HCT116 (cell line): ENCODE measurements at regions of chr9 and their contacts with region 1.

Region 1: GRCh38 chr9:22008736-22009562 is at the start of gene CDKN2B:
- DNase-seq: peak; percentile 80
- ATAC-seq: peak; percentile 89
- H3K4me3 ChIP-seq: peak within 1 kb of the TSS; percentile 71 to 80
- H3K27ac ChIP-seq: peak within 1 kb of the TSS; percentile 61
- H3K4me1 ChIP-seq: peaks cover 5 to 6% of the 10 kb centered on the region in 2 experiments; a peak in 3 of 4 replicates
- H3K27me3 ChIP-seq: no peaks in the 10 kb centered on the region
- CTCF ChIP-seq: peak; percentile 82 to 98 (median 90)
- POLR2A ChIP-seq: peak; percentile 65
- RAD21 ChIP-seq: peak; percentile 77
- total RNA-seq, gene CDKN2B: 9.8 TPM

Region 2: GRCh38 chr9:21836437-21837161 is 172.3 kb before region 1 on chr9:
- CTCF ChIA-PET with region 1: interaction called, 10 read pairs
- POLR2A ChIA-PET with region 1: interaction called, 5 read pairs
- RAD21 ChIA-PET with region 1: no interaction called
- intact Hi-C with region 1: no loop called
- DNase-seq: peak; percentile 94
- ATAC-seq: peak; percentile 80
- H3K4me3 ChIP-seq: peak overlapping the region; percentile 6 to 33; a peak in 2 of 4 replicates
- H3K27ac ChIP-seq: peak overlapping the region; percentile 66
- H3K4me1 ChIP-seq: peaks cover 18 to 62% of the 10 kb centered on the region in 2 experiments
- H3K27me3 ChIP-seq: no peaks in the 10 kb centered on the region
- CTCF ChIP-seq: no peak
- POLR2A ChIP-seq: no peak
- RAD21 ChIP-seq: no peak; the same call in 1 of the 2 replicates

Region 3: GRCh38 chr9:22037954-22038690 is 29.2 kb after region 1 on chr9:
- CTCF ChIA-PET with region 1: interaction called, 12 read pairs
- POLR2A ChIA-PET with region 1: interaction called, 9 read pairs
- RAD21 ChIA-PET with region 1: interaction called in 1 of 2 experiments, 3 read pairs
- intact Hi-C with region 1: loop called (anchors 5 kb)
- DNase-seq: peak; percentile 33
- ATAC-seq: peak; percentile 57; the same call in 1 of the 2 replicates
- H3K4me3 ChIP-seq: no peak overlapping the region
- H3K27ac ChIP-seq: no peak overlapping the region
- H3K4me1 ChIP-seq: peaks cover 11 to 17% of the 10 kb centered on the region in 2 experiments
- H3K27me3 ChIP-seq: no peaks in the 10 kb centered on the region
- CTCF ChIP-seq: peak; percentile 48 to 60 (median 55); a peak in 4 of 6 replicates
- POLR2A ChIP-seq: no peak
- RAD21 ChIP-seq: peak; percentile 76

Region 4: GRCh38 chr9:22119537-22120158 is 110.7 kb after region 1 on chr9:
- CTCF ChIA-PET with region 1: interaction called, 22 read pairs
- POLR2A ChIA-PET with region 1: interaction called, 8 read pairs
- RAD21 ChIA-PET with region 1: interaction called, 3 to 6 read pairs
- intact Hi-C with region 1: loop called (anchors 5 kb)
- DNase-seq: no peak
- ATAC-seq: peak; percentile 87
- H3K4me3 ChIP-seq: no peak overlapping the region
- H3K27ac ChIP-seq: no peak overlapping the region
- H3K4me1 ChIP-seq: peaks cover 2 to 10% of the 10 kb centered on the region in 2 experiments; a peak in 1 of 4 replicates
- H3K27me3 ChIP-seq: no peaks in the 10 kb centered on the region
- CTCF ChIP-seq: peak; percentile 61 to 68 (median 65)
- POLR2A ChIP-seq: no peak
- RAD21 ChIP-seq: peak; percentile 87

Region 5: GRCh38 chr9:22238809-22239684 is 230.1 kb after region 1 on chr9:
- CTCF ChIA-PET with region 1: interaction called, 23 read pairs
- POLR2A ChIA-PET with region 1: interaction called, 10 read pairs
- RAD21 ChIA-PET with region 1: interaction called in 1 of 2 experiments, 6 read pairs
- intact Hi-C with region 1: loop called (anchors 5 kb)
- DNase-seq: peak; percentile 37
- ATAC-seq: peak; percentile 43
- H3K4me3 ChIP-seq: peak overlapping the region in 1 of 2 experiments; percentile 12; a peak in 1 of 4 replicates
- H3K27ac ChIP-seq: peak overlapping the region; percentile 28; the same call in 1 of the 2 replicates
- H3K4me1 ChIP-seq: peaks cover 29 to 36% of the 10 kb centered on the region in 2 experiments
- H3K27me3 ChIP-seq: peaks cover 3% of the 10 kb centered on the region; the same call in 1 of the 2 replicates
- CTCF ChIP-seq: peak; percentile 52 to 69 (median 53); a peak in 5 of 6 replicates
- POLR2A ChIP-seq: peak; percentile 28
- RAD21 ChIP-seq: peak; percentile 64